Breast epithelium (tissue), 4 donors: ENCODE measurements at regions of chr3 and their contacts with region 1.

Region 1: GRCh38 chr3:141192345-141192744 is 39.3 kb upstream of the PXYLP1 start:
- DNase-seq: peak; percentile 94 to 99
- H3K4me3 ChIP-seq: no peak overlapping the region
- H3K27ac ChIP-seq: no peak overlapping the region
- H3K4me1 ChIP-seq: no peaks in the 10 kb centered on the region
- H3K27me3 ChIP-seq: no peaks in the 10 kb centered on the region
- CTCF ChIP-seq: peak; percentile 97 to 100 (median 99)
- POLR2A ChIP-seq: no peak

Region 2: DNA sequence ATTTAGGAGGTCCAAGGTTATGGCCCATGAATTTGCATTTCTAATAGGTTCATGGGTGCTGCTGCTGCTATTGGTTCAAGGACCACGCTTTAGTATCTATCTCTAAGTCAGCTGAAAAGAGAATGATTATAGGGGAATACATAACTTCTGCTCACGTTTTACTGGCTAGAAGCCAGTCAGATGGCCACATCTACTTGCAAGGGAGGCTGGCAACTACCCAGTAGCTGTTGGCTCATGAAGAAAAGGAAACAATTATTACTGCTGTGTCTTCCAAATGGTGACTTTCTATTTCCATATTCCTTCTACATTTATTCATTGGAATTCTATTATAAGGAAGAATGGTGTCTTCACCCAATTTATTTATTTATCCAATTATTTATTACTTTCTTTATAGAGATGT is 196.5 kb before region 1 on chr3:
- intact Hi-C with region 1: loop called (anchors 5 kb)
- DNase-seq: no peak
- H3K4me3 ChIP-seq: no peak overlapping the region
- H3K27ac ChIP-seq: no peak overlapping the region
- H3K4me1 ChIP-seq: no peaks in the 10 kb centered on the region
- H3K27me3 ChIP-seq: no peaks in the 10 kb centered on the region
- CTCF ChIP-seq: no peak
- POLR2A ChIP-seq: no peak